Motor neuron (in vitro differentiated cells): ENCODE measurements at regions of chr7 and their contacts with region 1.

Region 1: DNA sequence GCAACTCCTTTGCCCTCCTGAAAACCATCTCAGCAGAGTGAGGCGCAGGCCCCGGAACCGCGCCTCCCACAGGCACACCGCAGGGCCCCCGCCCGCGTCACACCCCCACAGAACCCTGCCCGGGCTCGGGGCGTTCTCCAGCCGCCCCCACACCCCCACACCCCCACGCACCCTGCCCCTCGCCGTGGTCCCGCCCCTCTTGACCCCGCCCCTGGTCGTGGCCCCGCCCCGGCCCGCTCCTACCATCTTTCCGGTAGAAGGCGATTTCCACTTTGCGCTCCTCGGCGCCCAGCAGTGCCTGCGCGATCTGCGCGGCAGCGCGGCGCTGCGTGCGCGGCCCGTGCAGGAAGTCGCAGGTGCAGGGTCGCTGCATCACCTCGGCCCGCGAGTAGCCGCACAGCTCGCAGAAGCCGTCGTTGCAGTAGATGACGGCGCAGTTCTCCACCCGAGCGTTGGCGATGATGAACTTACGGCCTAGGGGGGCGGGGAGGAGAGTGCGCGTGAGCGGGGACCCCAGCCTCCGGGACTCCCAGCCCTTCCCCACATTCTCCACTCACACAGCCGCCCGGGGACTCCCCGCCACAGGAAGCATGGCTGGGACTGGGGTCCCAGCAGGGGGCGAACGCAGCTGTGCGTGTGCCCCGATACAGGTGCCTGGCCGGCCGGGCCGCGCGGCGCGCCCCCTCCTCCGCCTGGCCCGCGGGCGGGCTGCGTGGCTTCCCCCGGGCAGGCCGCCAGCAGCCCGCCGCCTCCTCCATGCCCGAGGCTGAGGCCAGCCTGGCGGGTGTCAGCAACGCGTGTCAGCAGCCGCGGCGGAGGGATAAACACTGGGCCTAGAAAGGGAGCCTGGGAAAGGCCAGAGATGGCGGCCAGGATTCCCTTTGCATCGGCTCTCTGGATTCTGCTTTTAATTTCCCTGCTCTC is 3.4 kb downstream of the KCNH2 start:
- ATAC-seq: peak; percentile 5 to 43 (median 22)
- H3K4me3 ChIP-seq: peak overlapping the region; percentile 26 to 99 (median 27)
- H3K27ac ChIP-seq: peak overlapping the region; percentile 50 to 76
- H3K4me1 ChIP-seq: peaks cover 55 to 57% of the 10 kb centered on the region in 2 donors

Region 2: DNA sequence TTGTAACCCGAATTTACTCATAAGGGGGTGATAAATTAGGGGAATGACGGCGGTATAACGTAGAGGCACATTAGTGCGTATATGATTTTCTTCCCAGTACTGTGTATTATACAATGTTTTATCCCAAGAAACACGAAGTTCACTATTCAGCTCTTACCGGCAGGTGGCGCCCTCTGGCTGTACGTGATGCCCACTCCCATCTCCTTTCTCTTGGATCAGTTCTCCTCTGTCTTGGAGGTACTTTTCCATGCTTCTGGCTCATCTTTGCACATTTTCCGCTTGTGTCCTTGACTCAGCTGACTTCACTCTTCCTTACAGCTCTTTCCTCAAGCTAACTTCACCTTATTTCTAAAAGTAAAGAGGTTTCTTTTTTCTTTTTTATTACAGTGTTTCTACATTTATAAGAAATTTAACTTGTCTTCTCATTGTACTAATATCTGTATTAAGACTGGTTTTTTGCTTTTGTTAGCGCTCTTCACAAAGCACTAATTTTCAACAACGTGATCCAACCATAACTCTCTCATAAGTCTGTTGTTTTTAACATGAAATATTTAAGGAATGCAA is 195.9 kb before region 1 on chr7:
- in situ Hi-C with region 1: loop called in 5 of 9 experiments (anchors 25 kb)
- ATAC-seq: peak; percentile 81 to 99 (median 92)
- H3K4me3 ChIP-seq: no peak overlapping the region
- H3K27ac ChIP-seq: no peak overlapping the region
- H3K4me1 ChIP-seq: no peaks in the 10 kb centered on the region

Region 3: DNA sequence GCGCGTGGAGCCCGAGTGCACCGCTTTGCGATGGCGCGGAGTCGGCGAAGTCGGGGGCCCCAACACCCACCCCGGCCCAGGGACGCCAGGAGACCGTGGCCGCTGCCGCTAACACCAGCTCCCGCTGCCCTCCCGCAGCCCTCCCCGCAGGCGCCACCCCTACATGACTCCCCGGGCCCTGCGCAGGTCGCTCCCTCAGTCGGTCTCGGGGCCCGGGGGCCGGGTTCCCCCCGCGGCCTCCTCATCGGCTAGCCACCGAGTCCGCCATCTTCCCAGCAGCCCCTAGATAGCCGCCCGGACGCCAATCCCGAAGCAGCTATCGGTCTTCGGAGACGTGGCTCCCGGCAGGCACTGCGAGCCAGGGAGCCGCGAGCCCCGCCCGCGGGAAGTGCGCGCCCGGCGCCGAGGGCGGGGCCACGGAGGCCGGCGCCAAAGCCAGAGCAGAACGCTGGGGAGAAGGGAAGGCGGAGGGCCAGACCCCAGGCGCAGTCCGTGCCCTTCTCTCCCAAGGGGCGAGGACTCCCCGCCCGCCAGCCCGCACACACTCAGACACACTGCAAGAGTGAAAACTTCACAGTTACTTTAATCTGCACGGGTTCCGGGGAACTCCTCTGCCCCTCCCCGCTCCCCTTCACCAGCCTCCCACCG is 105.9 kb after region 1 on chr7 and contains the start of gene FASTK:
- in situ Hi-C with region 1: no loop called
- ATAC-seq: peak; percentile 55 to 75 (median 61)
- H3K4me3 ChIP-seq: peak within 1 kb of the TSS; percentile 84 to 95 (median 93)
- H3K27ac ChIP-seq: peak within 1 kb of the TSS; percentile 97 to 98
- H3K4me1 ChIP-seq: peaks cover 42 to 47% of the 10 kb centered on the region in 2 donors
- total RNA-seq, gene FASTK: 33.5 to 79.4 (median 59.9) TPM

Region 4: GRCh38 chr7:151550656-151551286 is 576.0 kb after region 1 on chr7:
- in situ Hi-C with region 1: no loop called
- ATAC-seq: peak in 1 of 8 experiments; percentile 36
- H3K4me3 ChIP-seq: no peak overlapping the region
- H3K27ac ChIP-seq: no peak overlapping the region
- H3K4me1 ChIP-seq: no peaks in the 10 kb centered on the region